ENCODE measurements at regions of chr6 and their contacts with region 1.

Region 1: DNA sequence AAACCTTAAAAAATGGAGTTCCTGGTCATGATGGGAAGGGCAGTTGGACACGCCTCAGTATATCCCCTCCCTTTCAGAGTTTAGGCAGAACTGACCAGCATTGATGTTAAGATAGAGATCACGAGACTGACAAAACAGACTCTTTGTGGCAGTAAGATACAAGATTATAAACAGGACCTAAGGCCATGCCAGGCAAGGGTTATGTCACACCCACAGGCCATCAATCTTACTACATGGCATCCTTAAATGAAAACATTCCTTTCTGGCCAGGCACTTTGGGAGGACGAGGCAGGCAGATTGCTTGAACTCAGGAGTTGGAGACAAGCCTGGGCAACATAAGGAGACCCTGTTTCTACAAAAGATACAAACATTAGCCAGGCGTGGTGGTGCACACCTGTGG is 129.3 kb upstream of the MLN start:
- DNase-seq: no peak
- ATAC-seq: no peak
- H3K4me3 ChIP-seq: no peak overlapping the region
- H3K4me3 Mint-ChIP-seq: no peak overlapping the region
- H3K27ac ChIP-seq: no peak overlapping the region
- H3K27ac Mint-ChIP-seq: no peak overlapping the region
- H3K4me1 ChIP-seq: no peaks in the 10 kb centered on the region
- H3K4me1 Mint-ChIP-seq: no peaks in the 10 kb centered on the region
- H3K27me3 ChIP-seq: no peaks in the 10 kb centered on the region
- H3K27me3 Mint-ChIP-seq: no peaks in the 10 kb centered on the region
- CTCF ChIP-seq: no peak

Region 2: DNA sequence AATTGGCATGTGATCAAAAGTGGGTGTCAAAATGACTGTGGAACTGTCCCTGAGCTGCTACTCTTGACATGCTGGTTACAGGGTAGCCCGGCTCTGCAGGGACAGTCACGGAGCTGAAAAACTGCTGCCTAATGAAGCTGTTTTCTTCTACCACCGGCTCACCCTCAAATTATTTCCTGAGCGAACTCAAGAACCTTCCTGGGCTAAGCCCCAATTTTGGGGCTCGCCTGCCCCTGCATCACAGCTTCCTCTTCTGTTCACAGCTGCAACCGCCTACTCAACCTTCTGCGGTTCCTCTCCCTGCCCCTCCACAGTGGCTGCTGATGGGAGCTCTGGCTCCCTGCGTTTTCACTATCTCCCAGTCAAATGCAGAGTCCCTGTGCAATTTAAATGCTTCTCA is 18.5 kb before region 1 on chr6:
- CTCF ChIA-PET with region 1: no interaction called
- POLR2A ChIA-PET with region 1: no interaction called
- intact Hi-C with region 1: loop called in 1 of 2 experiments (anchors 1 kb)
- DNase-seq: peak; percentile 29 to 82 (median 59)
- ATAC-seq: peak; percentile 87
- H3K4me3 ChIP-seq: peak overlapping the region in 1 of 2 experiments; percentile 4
- H3K4me3 Mint-ChIP-seq: peak overlapping the region; percentile 67
- H3K27ac ChIP-seq: no peak overlapping the region
- H3K27ac Mint-ChIP-seq: peak overlapping the region; percentile 68
- H3K4me1 ChIP-seq: peaks cover 38% of the 10 kb centered on the region
- H3K4me1 Mint-ChIP-seq: peaks cover 49% of the 10 kb centered on the region
- H3K27me3 ChIP-seq: no peaks in the 10 kb centered on the region
- H3K27me3 Mint-ChIP-seq: no peaks in the 10 kb centered on the region
- CTCF ChIP-seq: no peak